ENCODE measurements at regions of chr9 and their contacts with region 1.

Region 1: DNA sequence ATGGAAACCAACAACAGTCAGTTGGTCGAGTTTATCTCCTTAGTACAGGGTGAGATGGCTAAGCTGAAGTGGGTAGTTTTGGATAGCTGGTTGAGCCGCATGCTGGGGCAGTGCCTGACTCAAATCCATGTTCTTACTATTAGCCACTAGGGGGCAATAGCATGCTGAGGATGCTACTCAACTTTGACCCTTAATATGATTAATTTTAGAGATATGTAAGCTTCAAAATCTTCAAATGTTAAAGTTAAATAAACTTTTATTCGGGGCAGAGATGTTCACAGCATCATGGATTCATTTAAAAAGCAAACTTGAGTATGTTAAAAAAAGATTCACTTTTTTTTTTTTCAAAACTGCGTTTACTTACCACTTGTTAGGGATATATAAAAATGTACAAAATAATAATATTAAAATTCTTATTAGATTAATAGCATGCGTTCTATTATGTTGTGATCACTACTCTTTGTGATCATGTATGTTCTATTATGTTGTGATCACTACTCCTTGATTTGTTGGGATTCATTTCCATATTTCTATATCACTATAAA is 57.0 kb downstream of the C9orf153 start:
- DNase-seq: no peak
- H3K4me3 ChIP-seq: no peak overlapping the region
- CTCF ChIP-seq: no peak
- POLR2A ChIP-seq: no peak

Region 2: DNA sequence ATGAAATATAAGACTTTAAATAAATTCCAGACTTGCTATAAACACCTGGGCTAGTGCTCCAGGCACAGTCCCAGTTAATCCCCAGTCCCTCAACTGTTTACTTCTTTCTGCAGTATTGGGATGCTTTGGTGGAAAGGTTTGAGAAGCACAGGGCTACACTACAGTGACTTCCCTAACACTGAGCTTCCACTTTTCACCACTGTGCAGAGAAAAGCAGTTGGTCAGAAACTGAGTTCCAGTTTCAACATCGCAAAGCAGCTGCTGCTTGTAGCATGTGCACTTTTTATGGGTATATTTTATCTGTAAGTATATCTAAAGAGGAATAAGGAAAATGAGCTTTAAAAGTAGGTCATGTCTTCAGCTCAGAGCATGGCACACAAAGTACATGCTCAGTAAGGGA is 1193.2 kb before region 1 on chr9:
- intact Hi-C with region 1: loop called (anchors 5 kb)
- DNase-seq: no peak
- H3K4me3 ChIP-seq: no peak overlapping the region
- CTCF ChIP-seq: no peak
- POLR2A ChIP-seq: no peak